ENCODE measurements at regions of chr11 and their contacts with region 1.

Region 1: GRCh38 chr11:45371251-45372115 is 85.3 kb upstream of the SYT13 start:
- DNase-seq: peak; percentile 82 to 96
- H3K4me3 ChIP-seq: peak overlapping the region; percentile 2 to 57 (median 44); a peak in 5 of 8 replicates
- H3K27ac ChIP-seq: no peak overlapping the region
- H3K4me1 ChIP-seq: peaks cover 0 to 5% (median 4%) of the 10 kb centered on the region in 4 experiments
- H3K27me3 ChIP-seq: peaks cover 0 to 3% (median 0%) of the 10 kb centered on the region in 4 experiments; a peak in 5 of 7 replicates
- CTCF ChIP-seq: peak; percentile 88 to 99 (median 91)
- EP300 ChIP-seq: no peak
- POLR2A ChIP-seq: no peak
- RAD21 ChIP-seq: peak; percentile 95 to 96

Region 2: DNA sequence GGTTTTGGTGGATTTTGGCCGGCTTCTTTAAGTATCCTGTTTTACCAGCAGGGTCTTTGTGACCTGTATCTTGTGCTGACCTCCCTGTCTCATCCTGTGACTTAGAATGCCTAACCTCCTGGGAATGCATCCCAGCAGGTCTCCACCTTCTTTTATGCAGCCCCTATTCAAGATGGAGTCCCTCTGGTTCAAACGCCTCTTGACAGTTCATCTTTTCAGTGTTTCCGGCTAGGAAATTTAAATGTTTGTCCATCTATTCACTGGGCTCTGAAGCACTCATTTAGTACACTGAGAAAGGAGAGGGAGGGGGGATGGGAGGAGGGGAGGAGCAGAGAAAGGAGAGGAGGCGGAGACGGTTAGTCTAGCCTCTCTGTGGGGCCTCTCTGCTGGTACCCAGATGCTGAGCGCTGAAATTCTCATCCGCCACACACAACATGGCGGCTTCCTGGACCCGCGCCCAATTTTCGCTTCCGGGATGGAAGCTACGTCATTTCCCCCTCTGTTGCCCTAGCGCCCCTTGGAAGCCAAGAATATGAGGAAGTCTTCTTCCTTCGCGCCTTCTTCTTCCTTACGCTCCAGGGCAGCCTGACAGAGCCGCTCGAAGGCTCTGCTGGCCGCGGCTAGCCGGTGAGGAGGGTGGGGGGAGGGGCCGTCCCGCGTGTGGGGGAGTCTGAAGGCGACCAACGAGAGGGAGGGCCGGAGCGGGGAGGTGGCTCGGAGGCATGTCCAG is 16.3 kb before region 1 on chr11:
- CTCF ChIA-PET with region 1: interaction called, 22 read pairs
- POLR2A ChIA-PET with region 1: no interaction called
- DNase-seq: peak in 1 of 2 experiments; percentile 91
- H3K4me3 ChIP-seq: peak overlapping the region; percentile 57 to 75 (median 72)
- H3K27ac ChIP-seq: no peak overlapping the region; the same call in 1 of the 2 replicates
- H3K4me1 ChIP-seq: peaks cover 0 to 8% (median 5%) of the 10 kb centered on the region in 4 experiments; a peak in 4 of 7 replicates
- H3K27me3 ChIP-seq: no peaks in the 10 kb centered on the region; a peak in 1 of 7 replicates
- CTCF ChIP-seq: no peak
- EP300 ChIP-seq: no peak
- POLR2A ChIP-seq: no peak
- RAD21 ChIP-seq: 0 out of 4 replicates have a peak, but pooled peaks of 1 of the 2 experiments have one; percentile 0

Region 3: DNA sequence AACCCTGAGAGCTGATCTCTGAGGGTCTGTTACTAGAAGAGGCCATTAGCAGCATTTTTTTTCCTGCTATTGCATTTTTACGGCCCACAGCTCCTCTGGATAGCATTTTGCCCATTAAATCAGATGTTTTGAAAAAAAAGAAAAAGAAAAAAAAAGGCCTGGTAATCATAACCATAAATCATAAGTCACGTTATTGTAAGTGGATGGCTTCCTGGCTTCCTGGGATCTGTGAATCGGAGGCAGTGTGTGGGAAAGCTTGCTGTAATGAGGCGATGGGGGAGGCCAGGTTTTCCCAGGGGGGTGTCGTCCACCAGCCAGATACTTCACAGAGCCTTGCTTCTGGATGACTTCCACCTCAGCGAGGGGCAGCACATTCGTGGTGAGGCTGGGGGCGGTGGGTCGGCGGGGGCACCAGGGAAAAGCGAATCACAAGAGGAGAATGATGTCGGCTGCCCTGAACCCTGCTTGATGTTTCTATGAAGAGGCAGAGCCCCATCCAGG is 21.2 kb after region 1 on chr11:
- CTCF ChIA-PET with region 1: interaction called, 17 read pairs
- POLR2A ChIA-PET with region 1: no interaction called
- DNase-seq: no peak
- H3K4me3 ChIP-seq: no peak overlapping the region
- H3K27ac ChIP-seq: no peak overlapping the region
- H3K4me1 ChIP-seq: peaks cover 0 to 3% (median 0%) of the 10 kb centered on the region in 4 experiments; a peak in 1 of 7 replicates
- H3K27me3 ChIP-seq: no peaks in the 10 kb centered on the region; a peak in 1 of 7 replicates
- CTCF ChIP-seq: no peak
- EP300 ChIP-seq: no peak
- POLR2A ChIP-seq: no peak
- RAD21 ChIP-seq: no peak

Region 4: DNA sequence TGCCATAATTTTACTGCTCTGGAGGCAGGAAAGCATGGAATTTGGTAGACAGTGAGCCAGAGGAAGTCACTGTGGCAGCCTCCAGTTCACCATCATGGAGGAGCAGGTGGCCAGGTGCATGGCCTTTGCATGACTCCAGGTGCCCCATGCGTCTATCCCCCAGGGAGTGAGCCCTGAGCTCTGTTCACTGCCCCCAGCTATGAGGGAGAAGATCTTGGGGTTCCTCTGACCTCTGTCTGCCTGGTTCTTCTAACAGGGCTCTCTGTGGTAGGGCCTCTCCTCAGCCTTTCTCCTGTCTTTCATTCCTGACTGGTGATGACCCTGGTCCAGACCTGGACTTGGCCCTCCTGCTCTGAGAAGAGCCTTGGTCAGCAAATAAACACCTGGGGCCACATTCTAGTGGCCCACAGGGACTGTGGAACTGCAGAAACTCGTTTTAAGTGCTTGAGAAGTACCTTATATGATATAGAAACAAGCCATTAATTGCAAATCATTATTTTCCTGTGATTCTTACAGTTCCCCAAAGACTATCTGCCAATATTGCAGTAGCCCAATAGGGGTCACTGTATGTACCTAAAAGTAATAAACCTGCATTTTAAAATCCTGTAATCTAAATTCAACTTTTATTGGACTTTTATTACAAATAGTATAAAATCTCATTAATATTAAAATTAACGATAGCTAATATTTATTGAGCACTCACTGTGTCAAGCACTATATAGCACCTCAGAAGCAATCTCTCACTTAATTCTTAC is 34.6 kb after region 1 on chr11:
- CTCF ChIA-PET with region 1: interaction called, 29 read pairs
- POLR2A ChIA-PET with region 1: interaction called, 3 read pairs
- DNase-seq: no peak
- H3K4me3 ChIP-seq: no peak overlapping the region
- H3K27ac ChIP-seq: no peak overlapping the region
- H3K4me1 ChIP-seq: peaks cover 11 to 20% (median 13%) of the 10 kb centered on the region in 4 experiments
- H3K27me3 ChIP-seq: no peaks in the 10 kb centered on the region; a peak in 1 of 7 replicates
- CTCF ChIP-seq: peak in 2 of 3 experiments; percentile 12 to 41; a peak in 2 of 4 replicates
- EP300 ChIP-seq: no peak
- POLR2A ChIP-seq: no peak
- RAD21 ChIP-seq: peak in 1 of 2 experiments; percentile 36; a peak in 3 of 4 replicates

Region 5: DNA sequence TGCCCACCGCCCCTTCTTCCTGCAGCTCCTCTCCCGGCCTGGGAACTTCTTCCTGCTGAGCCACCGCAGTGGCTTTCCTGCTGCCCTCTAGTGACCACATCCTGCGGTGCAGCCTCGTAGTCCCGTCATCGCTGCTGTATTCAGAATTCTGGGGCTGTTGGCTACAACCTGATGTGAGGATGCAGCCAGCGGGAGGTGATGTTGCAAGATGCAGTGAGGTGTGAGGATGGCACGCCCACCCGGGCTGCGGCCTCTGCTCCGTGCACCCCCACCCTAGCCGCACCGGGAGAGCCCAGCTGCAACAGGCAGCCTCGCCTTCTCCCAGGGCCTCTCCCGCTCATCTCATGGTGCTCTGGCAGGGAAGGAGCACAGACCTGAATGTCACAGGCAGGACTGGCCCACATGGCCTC is 283.9 kb after region 1 on chr11:
- CTCF ChIA-PET with region 1: interaction called, 42 read pairs
- POLR2A ChIA-PET with region 1: interaction called, 3 read pairs
- DNase-seq: peak; percentile 75 to 98
- H3K4me3 ChIP-seq: no peak overlapping the region
- H3K27ac ChIP-seq: no peak overlapping the region
- H3K4me1 ChIP-seq: peaks cover 3 to 21% (median 11%) of the 10 kb centered on the region in 4 experiments
- H3K27me3 ChIP-seq: no peaks in the 10 kb centered on the region; a peak in 1 of 7 replicates
- CTCF ChIP-seq: peak; percentile 92 to 98 (median 97)
- EP300 ChIP-seq: peak; percentile 12 to 25; a peak in 1 of 3 replicates
- POLR2A ChIP-seq: no peak
- RAD21 ChIP-seq: peak; percentile 88 to 93

Measured in H1 (cell line).